ENCODE measurements at regions of chr15 and their contacts with region 1.

Region 1: DNA sequence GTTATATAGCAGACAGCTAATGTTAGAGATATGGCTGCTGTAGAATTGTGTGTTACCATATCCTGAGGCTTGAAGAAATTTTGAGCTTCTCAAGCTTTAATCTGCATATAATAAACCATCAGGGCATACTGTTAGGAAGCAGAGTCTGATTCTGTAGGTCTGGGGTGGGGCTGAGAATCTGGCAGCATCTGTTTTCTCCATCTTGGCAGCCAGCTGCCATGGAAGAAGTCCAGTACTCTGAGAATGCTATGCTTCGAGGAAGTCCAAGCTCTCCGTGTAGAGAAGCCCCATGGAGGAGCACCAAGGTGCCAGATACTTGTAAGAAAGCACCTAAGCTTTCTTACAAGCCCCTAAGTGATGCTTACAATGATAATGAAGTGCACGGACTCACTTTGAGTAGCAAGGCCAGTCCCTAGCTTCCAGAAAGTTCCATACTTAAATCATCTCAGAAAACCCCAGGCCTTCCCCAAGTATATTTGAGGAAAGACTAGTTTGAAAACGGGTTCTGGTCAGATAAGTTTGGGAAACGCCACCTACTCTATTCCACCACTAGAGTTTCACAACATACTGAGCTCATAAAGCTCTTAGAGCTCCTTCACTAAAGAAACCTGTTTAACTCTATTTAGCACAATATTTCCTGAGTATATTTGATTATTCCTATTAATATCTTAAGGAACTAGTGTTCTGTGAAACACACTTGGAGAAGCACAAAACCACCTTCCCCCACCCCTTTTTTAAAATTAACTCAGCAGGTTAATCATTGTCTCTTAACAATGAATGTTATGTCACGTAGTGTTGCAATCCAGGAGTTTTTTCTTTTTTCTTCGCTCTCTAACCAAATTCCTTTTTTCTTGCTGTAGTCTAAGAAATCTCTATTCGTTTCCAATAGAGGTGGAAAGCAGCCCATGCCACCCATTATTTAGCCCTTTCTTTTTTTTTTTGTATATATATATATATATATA is 59.9 kb upstream of the RASGRP1 start:
- DNase-seq: no peak
- H3K4me3 ChIP-seq: no peak overlapping the region
- H3K27ac ChIP-seq: no peak overlapping the region
- H3K4me1 ChIP-seq: no peaks in the 10 kb centered on the region
- H3K27me3 ChIP-seq: no peaks in the 10 kb centered on the region
- CTCF ChIP-seq: no peak
- EP300 ChIP-seq: no peak
- POLR2A ChIP-seq: no peak

Region 2: DNA sequence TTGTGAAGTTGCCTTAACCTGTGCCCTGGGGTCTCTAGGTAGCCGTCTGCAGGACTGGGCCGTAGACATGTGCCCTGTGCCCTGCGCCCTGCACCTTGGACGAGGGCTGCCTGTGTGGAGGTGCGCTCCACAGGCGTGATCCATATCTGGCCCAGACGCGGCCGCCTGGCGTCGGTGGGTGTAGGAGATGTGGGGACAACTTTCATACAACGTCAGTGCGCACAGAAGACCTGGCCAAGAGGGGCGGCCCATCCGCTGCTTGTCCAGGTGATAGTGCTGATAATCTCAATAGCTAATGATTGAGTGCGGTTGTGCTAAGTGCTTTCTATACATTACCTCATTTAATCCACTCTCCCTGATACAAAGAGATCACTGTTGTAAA is 59.2 kb before region 1 on chr15:
- intact Hi-C with region 1: loop called in 1 of 4 experiments (anchors 5 kb)
- DNase-seq: no peak
- H3K4me3 ChIP-seq: no peak overlapping the region
- H3K27ac ChIP-seq: no peak overlapping the region
- H3K4me1 ChIP-seq: no peaks in the 10 kb centered on the region
- H3K27me3 ChIP-seq: no peaks in the 10 kb centered on the region
- CTCF ChIP-seq: no peak
- EP300 ChIP-seq: no peak
- POLR2A ChIP-seq: no peak

Region 3: GRCh38 chr15:38782156-38782555 is 157.6 kb after region 1 on chr15:
- intact Hi-C with region 1: no loop called
- DNase-seq: no peak
- H3K4me3 ChIP-seq: no peak overlapping the region
- H3K27ac ChIP-seq: no peak overlapping the region
- H3K4me1 ChIP-seq: no peaks in the 10 kb centered on the region
- H3K27me3 ChIP-seq: no peaks in the 10 kb centered on the region
- CTCF ChIP-seq: no peak
- EP300 ChIP-seq: no peak
- POLR2A ChIP-seq: no peak

Measured in ovary (tissue), 10 donors.